ENCODE measurements at regions of chr5 and their contacts with region 1.

Region 1: GRCh38 chr5:32174011-32174870 is at the start of gene GOLPH3:
- DNase-seq: peak; percentile 88
- H3K4me3 ChIP-seq: peak within 1 kb of the TSS; percentile 75 to 99 (median 83)
- H3K27ac ChIP-seq: peak within 1 kb of the TSS; percentile 83
- H3K4me1 ChIP-seq: peaks cover 19% of the 10 kb centered on the region
- H3K27me3 ChIP-seq: no peaks in the 10 kb centered on the region
- CTCF ChIP-seq: no peak
- total RNA-seq, gene GOLPH3: 61.7 to 67.7 TPM

Region 2: DNA sequence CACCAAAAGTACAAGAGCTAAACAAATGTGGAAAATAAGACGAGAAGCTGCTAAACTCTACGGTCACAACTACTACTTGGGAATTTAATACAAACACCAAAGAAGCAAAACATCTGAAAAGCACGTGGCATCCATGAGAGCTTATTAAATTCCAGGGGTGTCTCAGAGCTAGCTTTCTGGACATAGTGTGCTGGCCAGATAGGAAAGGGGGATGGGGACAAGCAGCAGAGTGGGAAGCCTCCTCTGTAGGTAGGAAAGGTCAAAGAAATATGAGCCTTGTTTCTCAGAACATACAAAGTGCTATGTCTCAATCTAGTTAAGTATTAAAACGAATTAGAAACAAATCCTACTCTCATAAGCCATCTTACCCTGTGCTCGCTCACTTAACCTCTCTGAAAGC is 51.2 kb after region 1 on chr5:
- CTCF ChIA-PET with region 1: no interaction called
- dilution Hi-C with region 1: loop called (anchors 5 kb)
- in situ Hi-C with region 1: no loop called
- intact Hi-C with region 1: loop called (anchors 5 kb)
- DNase-seq: no peak
- H3K4me3 ChIP-seq: no peak overlapping the region
- H3K27ac ChIP-seq: no peak overlapping the region
- H3K4me1 ChIP-seq: peaks cover 7% of the 10 kb centered on the region
- H3K27me3 ChIP-seq: no peaks in the 10 kb centered on the region
- CTCF ChIP-seq: no peak

Region 3: DNA sequence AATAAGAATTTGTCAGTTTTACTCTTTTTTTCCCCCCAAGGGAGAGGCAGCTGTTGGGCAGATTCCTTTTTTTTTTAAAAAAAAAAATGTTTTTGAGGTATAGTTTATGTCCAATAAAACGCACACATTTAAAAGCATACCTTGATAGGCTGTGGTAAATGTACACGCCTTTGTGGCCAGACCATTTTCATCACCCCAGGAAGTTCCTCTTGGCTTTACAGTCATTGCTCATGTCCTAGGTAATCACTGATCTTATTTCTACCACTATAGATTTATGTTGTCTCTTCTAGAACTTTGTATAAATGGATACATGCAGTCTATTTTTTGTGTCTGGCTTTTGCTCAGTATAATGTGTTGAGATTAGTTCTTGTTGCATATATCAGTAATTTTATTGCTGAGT is 420.9 kb after region 1 on chr5:
- CTCF ChIA-PET with region 1: no interaction called
- dilution Hi-C with region 1: no loop called
- in situ Hi-C with region 1: no loop called
- intact Hi-C with region 1: loop called (anchors 5 kb)
- DNase-seq: no peak
- H3K4me3 ChIP-seq: no peak overlapping the region
- H3K27ac ChIP-seq: no peak overlapping the region
- H3K4me1 ChIP-seq: peaks cover 4% of the 10 kb centered on the region
- H3K27me3 ChIP-seq: no peaks in the 10 kb centered on the region
- CTCF ChIP-seq: no peak